ENCODE measurements at regions of chr7 and their contacts with region 1.

Region 1: DNA sequence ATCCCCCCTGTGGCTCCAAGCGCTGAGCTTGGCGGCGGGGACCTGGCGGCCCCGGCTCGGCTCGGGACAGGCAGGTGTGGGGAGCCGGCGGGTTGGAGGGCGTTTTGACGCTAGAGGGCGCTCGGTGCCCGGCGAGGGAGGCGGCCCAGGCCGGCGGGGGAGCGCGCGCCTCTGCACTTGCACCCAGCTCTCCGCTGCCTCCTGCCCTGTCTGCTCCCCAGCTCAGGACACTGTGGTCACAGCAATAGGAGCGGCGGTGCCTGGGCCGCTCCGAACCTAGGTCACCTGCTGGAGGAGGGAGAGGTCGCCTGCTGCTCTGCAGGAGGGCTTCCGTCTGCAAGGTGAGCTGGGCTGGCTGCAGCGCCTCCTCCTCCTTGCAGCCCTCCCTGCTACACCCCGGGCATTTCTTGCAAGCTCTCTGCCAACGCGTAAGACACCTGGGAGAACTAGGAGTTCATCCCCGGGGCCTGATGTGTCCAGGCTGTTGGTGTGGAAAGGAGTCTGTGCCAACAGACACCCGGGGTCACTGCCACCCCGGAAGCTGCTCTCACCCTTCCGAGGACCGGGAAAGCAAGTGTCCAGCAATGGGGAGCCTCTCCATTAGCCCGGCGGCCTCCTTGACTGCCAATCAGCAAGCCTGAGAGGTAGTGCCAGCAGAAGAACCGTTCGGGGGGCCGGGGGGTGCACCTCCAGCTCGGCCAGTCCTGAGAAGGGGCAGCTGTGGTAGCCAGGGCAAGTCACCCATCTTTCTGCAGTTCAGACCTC is 620.4 kb downstream of the GALNT17 start:
- DNase-seq: peak in 3 of 5 donors; percentile 30 to 78 (median 31)
- ATAC-seq: peak in 3 of 4 donors; percentile 81 to 90 (median 89)
- H3K4me3 ChIP-seq: no peak overlapping the region
- H3K27ac ChIP-seq: no peak overlapping the region
- H3K4me1 ChIP-seq: peaks cover 0 to 6% (median 0%) of the 10 kb centered on the region in 12 donors
- H3K27me3 ChIP-seq: peaks cover 3 to 40% (median 12%) of the 10 kb centered on the region in 9 donors
- CTCF ChIP-seq: peak; percentile 43 to 71 (median 56)
- POLR2A ChIP-seq: no peak

Region 2: GRCh38 chr7:72785166-72785955 is 1033.0 kb after region 1 on chr7:
- intact Hi-C with region 1: loop called in 1 of 10 experiments (anchors 10 kb)
- DNase-seq: no peak
- ATAC-seq: no peak
- H3K4me3 ChIP-seq: no peak overlapping the region
- H3K27ac ChIP-seq: no peak overlapping the region
- H3K4me1 ChIP-seq: peaks cover 0 to 10% (median 5%) of the 10 kb centered on the region in 12 donors
- H3K27me3 ChIP-seq: no peaks in the 10 kb centered on the region
- CTCF ChIP-seq: no peak
- POLR2A ChIP-seq: no peak

Measured in heart left ventricle (tissue), 16 donors.